Colonic mucosa (tissue), 4 donors: ENCODE measurements at regions of chr19 and their contacts with region 1.

Region 1: DNA sequence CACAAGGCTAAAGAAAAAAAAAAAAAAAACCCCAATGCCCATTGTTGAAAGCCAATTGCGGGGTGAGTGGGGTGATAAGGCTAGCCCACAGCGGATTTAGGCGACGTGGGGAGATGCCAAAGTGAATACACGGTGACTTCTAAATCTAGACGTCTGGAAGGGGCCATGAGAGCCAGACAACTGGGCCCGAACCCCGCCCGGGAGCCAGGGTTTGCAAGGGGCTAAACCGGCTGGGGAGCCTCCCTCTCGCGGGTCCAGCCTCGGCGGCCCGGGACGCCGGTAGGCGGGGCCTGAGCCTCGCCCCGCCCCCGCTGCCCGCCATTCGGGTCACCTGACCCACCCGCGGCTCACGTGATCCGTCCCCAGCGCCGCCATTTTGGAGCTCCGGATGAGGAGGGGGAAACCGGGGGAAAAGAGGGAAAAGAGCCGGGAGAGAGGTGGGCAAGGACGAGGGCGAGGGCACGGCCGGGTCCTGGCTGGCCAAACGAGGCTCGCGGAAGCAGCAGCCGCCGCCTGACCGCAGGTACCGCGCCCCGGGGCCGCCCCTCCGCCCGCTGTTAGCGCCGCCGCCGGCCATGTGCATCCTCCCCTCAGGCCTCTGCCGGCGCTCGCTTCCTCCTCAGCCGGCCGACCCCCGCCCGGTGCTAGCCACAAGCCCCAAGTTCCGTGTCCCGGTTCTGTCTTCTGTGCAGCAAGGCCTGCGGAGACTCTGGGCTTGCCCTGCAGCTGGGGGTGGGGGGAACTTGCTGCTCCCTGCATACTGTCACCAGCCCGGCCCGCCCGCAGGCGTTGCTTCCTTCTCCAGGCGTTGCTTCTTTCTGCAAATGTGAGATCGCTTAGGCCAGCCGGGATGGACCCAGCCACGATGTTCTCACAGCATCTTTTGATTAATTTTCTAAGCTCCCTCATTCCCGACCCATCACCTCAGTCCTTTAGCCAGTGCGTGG is at the start of gene ZNF507:
- DNase-seq: peak; percentile 84
- H3K4me3 ChIP-seq: peak within 1 kb of the TSS; percentile 97
- H3K27ac ChIP-seq: peak within 1 kb of the TSS; percentile 81
- H3K4me1 ChIP-seq: peaks cover 11% of the 10 kb centered on the region
- H3K27me3 ChIP-seq: no peaks in the 10 kb centered on the region
- CTCF ChIP-seq: no peak
- total RNA-seq, gene ZNF507: 15.3 to 16.6 TPM

Region 2: GRCh38 chr19:32405431-32406161 is 60.1 kb after region 1 on chr19 and contains the start of gene DPY19L3:
- intact Hi-C with region 1: loop called (anchors 10 kb)
- DNase-seq: peak; percentile 96
- H3K4me3 ChIP-seq: peak within 1 kb of the TSS; percentile 88
- H3K27ac ChIP-seq: peak within 1 kb of the TSS; percentile 99
- H3K4me1 ChIP-seq: no peaks in the 10 kb centered on the region
- H3K27me3 ChIP-seq: no peaks in the 10 kb centered on the region
- CTCF ChIP-seq: no peak
- total RNA-seq, gene DPY19L3: 12.1 to 13.6 TPM